IMR-90 (cell line): ENCODE measurements at regions of chr15 and their contacts with region 1.

Region 1: GRCh38 chr15:62035256-62035908 is 24.9 kb downstream of the VPS13C start:
- DNase-seq: peak; percentile 75
- ATAC-seq: peak; percentile 91
- H3K4me3 ChIP-seq: no peak overlapping the region
- H3K27ac ChIP-seq: no peak overlapping the region
- H3K4me1 ChIP-seq: peaks cover 4% of the 10 kb centered on the region; the same call in 1 of the 2 replicates
- H3K27me3 ChIP-seq: no peaks in the 10 kb centered on the region
- CTCF ChIP-seq: no peak
- POLR2A ChIP-seq: no peak
- RAD21 ChIP-seq: no peak

Region 2: GRCh38 chr15:61871926-61872522 is 163.4 kb before region 1 on chr15:
- CTCF ChIA-PET with region 1: no interaction called
- POLR2A ChIA-PET with region 1: no interaction called
- dilution Hi-C with region 1: no loop called
- in situ Hi-C with region 1: no loop called
- intact Hi-C with region 1: no loop called
- DNase-seq: peak; percentile 20
- ATAC-seq: peak; percentile 66; the same call in 1 of the 2 replicates
- H3K4me3 ChIP-seq: no peak overlapping the region
- H3K27ac ChIP-seq: no peak overlapping the region
- H3K4me1 ChIP-seq: no peaks in the 10 kb centered on the region
- H3K27me3 ChIP-seq: no peaks in the 10 kb centered on the region
- CTCF ChIP-seq: peak; percentile 52
- POLR2A ChIP-seq: no peak
- RAD21 ChIP-seq: peak; percentile 50

Region 3: GRCh38 chr15:61951949-61952348 is 83.4 kb before region 1 on chr15:
- CTCF ChIA-PET with region 1: no interaction called
- POLR2A ChIA-PET with region 1: no interaction called
- dilution Hi-C with region 1: no loop called
- in situ Hi-C with region 1: no loop called
- intact Hi-C with region 1: loop called (anchors 5 kb)
- DNase-seq: peak; percentile 4
- ATAC-seq: no peak
- H3K4me3 ChIP-seq: no peak overlapping the region
- H3K27ac ChIP-seq: no peak overlapping the region
- H3K4me1 ChIP-seq: no peaks in the 10 kb centered on the region
- H3K27me3 ChIP-seq: no peaks in the 10 kb centered on the region
- CTCF ChIP-seq: no peak
- POLR2A ChIP-seq: no peak
- RAD21 ChIP-seq: no peak